H1 (cell line): ENCODE measurements at regions of chr6 and their contacts with region 1.

Region 1: DNA sequence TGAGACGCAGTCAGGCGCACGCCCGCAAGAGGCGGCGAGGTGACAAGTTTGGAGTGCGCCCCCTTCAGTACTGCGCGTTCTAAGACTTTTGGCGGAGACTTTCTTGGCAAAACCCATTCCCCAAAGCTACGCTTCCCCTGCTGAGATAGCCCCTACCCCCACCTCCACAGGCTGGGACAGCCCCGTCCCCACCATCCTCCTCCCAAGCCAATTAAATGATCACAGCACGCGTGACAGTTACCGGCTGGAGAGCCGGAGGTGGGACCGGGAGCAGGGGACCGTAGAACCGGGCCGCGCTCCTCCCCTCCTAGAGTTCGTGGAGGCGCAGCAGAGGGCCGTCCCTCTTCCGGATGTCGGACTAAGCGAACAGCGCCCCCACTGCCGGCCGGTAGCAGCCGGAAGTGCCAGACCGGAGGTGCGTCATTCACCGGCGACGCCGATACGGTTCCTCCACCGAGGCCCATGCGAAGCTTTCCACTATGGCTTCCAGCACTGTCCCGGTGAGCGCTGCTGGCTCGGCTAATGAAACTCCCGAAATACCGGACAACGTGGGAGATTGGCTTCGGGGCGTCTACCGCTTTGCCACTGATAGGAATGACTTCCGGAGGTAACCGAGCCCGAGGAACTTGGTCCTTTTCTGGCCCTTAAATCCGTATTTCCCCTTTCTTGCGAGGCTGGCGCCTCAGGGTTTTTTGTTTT is at the start of gene TOMM6:
- DNase-seq: peak; percentile 77 to 98
- H3K4me3 ChIP-seq: peak within 1 kb of the TSS; percentile 94 to 100 (median 98)
- H3K27ac ChIP-seq: peak within 1 kb of the TSS; percentile 81
- H3K4me1 ChIP-seq: peaks cover 0 to 4% (median 3%) of the 10 kb centered on the region in 4 experiments; a peak in 6 of 7 replicates
- H3K27me3 ChIP-seq: peaks cover 0 to 27% (median 21%) of the 10 kb centered on the region in 4 experiments; a peak in 6 of 7 replicates
- CTCF ChIP-seq: peak; percentile 90 to 92 (median 90)
- EP300 ChIP-seq: peak in 1 of 2 experiments; percentile 48; a peak in 1 of 3 replicates
- POLR2A ChIP-seq: peak; percentile 90 to 97
- RAD21 ChIP-seq: peak; percentile 1 to 15; a peak in 2 of 4 replicates
- total RNA-seq, gene TOMM6: 216 and 228 TPM in 2 replicates

Region 2: DNA sequence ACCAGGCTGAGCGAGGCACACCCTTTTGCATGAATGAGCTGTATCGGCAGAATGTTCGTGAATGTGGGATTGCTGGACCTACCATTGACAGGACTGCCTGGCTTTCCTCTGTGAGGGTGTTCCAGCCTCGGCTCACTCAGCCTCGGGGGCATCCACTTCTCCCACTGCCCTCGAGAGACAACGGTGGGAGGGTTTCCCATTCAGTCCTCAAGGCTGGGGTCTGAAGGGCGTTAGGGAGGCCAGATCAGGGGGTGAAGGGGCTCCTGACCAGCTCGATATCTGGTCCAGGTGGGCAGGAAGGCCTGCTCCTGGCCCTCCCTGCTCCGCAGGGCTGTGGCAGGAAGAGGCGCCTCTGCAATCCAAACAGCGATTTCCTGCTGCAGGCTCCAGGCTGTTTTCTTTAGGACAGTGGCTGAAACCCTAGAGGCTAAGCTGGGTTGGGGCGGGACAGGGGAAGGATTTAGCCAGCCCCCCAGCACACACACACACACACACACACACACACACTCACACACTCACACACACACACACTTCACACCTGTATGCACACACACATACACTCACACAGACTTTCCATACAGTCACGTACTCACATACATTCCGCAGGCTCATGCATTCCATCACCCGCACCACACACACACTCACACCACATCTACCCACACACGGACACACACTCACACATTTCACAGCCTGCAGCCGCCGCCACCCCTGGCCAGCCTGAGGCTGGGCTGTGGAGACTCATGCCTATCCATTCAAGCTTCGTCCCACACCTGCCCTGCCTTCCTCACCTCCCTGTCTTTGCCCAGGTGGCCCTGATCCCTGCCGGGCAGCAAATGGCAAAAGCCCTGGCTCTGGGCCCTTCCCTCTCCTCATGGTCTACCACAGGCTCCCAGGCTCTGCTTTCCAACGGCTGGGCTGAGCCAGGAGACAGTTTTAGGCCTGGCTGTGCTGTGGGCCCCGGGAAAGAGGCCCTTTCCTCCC is 131.4 kb before region 1 on chr6:
- CTCF ChIA-PET with region 1: no interaction called
- POLR2A ChIA-PET with region 1: no interaction called
- DNase-seq: peak in 1 of 2 experiments; percentile 49
- H3K4me3 ChIP-seq: no peak overlapping the region
- H3K27ac ChIP-seq: no peak overlapping the region
- H3K4me1 ChIP-seq: peaks cover 0 to 11% (median 4%) of the 10 kb centered on the region in 4 experiments; a peak in 4 of 7 replicates
- H3K27me3 ChIP-seq: no peaks in the 10 kb centered on the region; a peak in 1 of 7 replicates
- CTCF ChIP-seq: no peak
- EP300 ChIP-seq: no peak
- POLR2A ChIP-seq: no peak
- RAD21 ChIP-seq: no peak

Region 3: DNA sequence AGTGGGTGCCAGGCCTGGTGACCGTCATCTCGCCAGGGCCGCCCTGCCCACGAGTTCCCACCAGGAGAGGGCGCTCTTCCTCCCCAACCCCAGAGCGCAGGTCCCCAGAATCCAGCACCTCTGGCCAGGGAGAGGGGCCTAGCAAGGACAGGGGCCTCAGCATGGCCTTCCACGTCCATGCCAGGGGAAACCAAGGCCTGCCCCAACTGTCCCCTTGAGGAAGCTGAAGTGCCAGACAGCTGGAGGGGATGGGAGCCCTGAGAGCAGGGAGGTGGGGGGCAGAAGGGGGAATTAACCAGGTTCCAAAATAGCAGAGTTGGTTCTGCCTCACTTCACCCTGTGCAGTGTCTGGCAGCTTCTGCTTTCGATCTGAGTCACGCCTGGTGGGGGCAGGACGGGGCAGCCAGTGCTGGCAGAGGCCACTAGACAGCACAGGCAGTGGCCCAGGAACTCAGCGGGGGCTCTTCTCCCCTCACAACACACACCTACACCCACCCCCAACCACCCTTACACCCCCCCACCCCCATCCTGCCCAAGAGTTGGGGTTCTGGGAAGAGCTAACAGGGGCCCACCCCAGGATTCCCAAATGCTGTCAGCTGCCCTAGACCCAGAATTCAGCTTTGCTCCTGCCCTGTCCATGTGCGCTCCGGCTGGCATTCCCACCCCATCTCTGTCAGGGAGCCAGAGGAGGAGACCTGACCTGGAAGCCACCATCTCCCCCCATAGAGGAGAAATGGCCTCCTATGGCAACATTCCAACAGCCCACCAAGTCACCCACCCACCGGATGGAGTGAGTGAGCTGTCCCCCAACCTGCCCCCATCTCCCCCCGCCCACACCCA is 81.2 kb before region 1 on chr6:
- CTCF ChIA-PET with region 1: interaction called, 31 read pairs
- POLR2A ChIA-PET with region 1: interaction called, 3 read pairs
- DNase-seq: peak; percentile 56 to 92
- H3K4me3 ChIP-seq: no peak overlapping the region
- H3K27ac ChIP-seq: no peak overlapping the region
- H3K4me1 ChIP-seq: peaks cover 0 to 8% (median 3%) of the 10 kb centered on the region in 4 experiments; a peak in 4 of 7 replicates
- H3K27me3 ChIP-seq: no peaks in the 10 kb centered on the region; a peak in 1 of 7 replicates
- CTCF ChIP-seq: peak in 2 of 3 experiments; percentile 92 to 97; a peak in 3 of 4 replicates
- EP300 ChIP-seq: no peak
- POLR2A ChIP-seq: no peak
- RAD21 ChIP-seq: peak; percentile 68 to 81

Region 4: GRCh38 chr6:41775293-41776181 is 11.8 kb before region 1 on chr6:
- CTCF ChIA-PET with region 1: interaction called, 29 read pairs
- POLR2A ChIA-PET with region 1: interaction called, 3 read pairs
- DNase-seq: peak; percentile 38 to 57
- H3K4me3 ChIP-seq: no peak overlapping the region
- H3K27ac ChIP-seq: no peak overlapping the region
- H3K4me1 ChIP-seq: peaks cover 0 to 5% (median 3%) of the 10 kb centered on the region in 4 experiments; a peak in 1 of 7 replicates
- H3K27me3 ChIP-seq: no peaks in the 10 kb centered on the region; a peak in 1 of 7 replicates
- CTCF ChIP-seq: peak; percentile 96 to 98 (median 98)
- EP300 ChIP-seq: no peak
- POLR2A ChIP-seq: no peak
- RAD21 ChIP-seq: peak; percentile 87 to 92

Region 5: GRCh38 chr6:41895300-41896233 is 108.2 kb after region 1 on chr6 and contains the start of gene USP49:
- CTCF ChIA-PET with region 1: interaction called, 4 read pairs
- POLR2A ChIA-PET with region 1: interaction called, 11 read pairs
- DNase-seq: peak; percentile 59 to 97
- H3K4me3 ChIP-seq: peak within 1 kb of the TSS; percentile 80 to 95 (median 86)
- H3K27ac ChIP-seq: peak within 1 kb of the TSS; percentile 83
- H3K4me1 ChIP-seq: peaks cover 0 to 11% (median 4%) of the 10 kb centered on the region in 4 experiments; a peak in 4 of 7 replicates
- H3K27me3 ChIP-seq: no peaks in the 10 kb centered on the region
- CTCF ChIP-seq: no peak
- EP300 ChIP-seq: 0 out of 3 replicates have a peak, but pooled peaks of 1 of the 2 experiments have one; percentile 4
- POLR2A ChIP-seq: peak; percentile 20 to 71
- RAD21 ChIP-seq: no peak
- total RNA-seq, gene USP49: 21.1 and 24.4 TPM in 2 replicates

Region 6: GRCh38 chr6:41941280-41942066 is 154.1 kb after region 1 on chr6 and contains the start of gene CCND3:
- CTCF ChIA-PET with region 1: interaction called, 12 read pairs
- POLR2A ChIA-PET with region 1: interaction called, 8 read pairs
- DNase-seq: peak in 1 of 2 experiments; percentile 83
- H3K4me3 ChIP-seq: peak within 1 kb of the TSS; percentile 69 to 91 (median 84)
- H3K27ac ChIP-seq: no peak within 1 kb of the TSS
- H3K4me1 ChIP-seq: peaks cover 6 to 28% (median 23%) of the 10 kb centered on the region in 4 experiments
- H3K27me3 ChIP-seq: no peaks in the 10 kb centered on the region
- CTCF ChIP-seq: no peak
- EP300 ChIP-seq: no peak
- POLR2A ChIP-seq: no peak
- RAD21 ChIP-seq: 0 out of 4 replicates have a peak, but pooled peaks of 1 of the 2 experiments have one; percentile 6
- total RNA-seq, gene CCND3: 28.4 and 32.9 TPM in 2 replicates